ENCODE measurements at regions of chr16 and their contacts with region 1.

Region 1: GRCh38 chr16:56866943-56867830 is 2.2 kb downstream of the SLC12A3 start:
- DNase-seq: peak; percentile 69
- H3K4me3 ChIP-seq: no peak overlapping the region
- H3K27ac ChIP-seq: no peak overlapping the region
- H3K4me1 ChIP-seq: peaks cover 0 to 15% of the 10 kb centered on the region in 2 experiments; a peak in 1 of 4 replicates
- H3K27me3 ChIP-seq: no peaks in the 10 kb centered on the region
- CTCF ChIP-seq: peak; percentile 80
- EP300 ChIP-seq: no peak
- RAD21 ChIP-seq: peak; percentile 80

Region 2: GRCh38 chr16:55981557-55981956 is 885.6 kb before region 1 on chr16:
- CTCF ChIA-PET with region 1: no interaction called
- POLR2A ChIA-PET with region 1: no interaction called
- DNase-seq: no peak
- H3K4me3 ChIP-seq: no peak overlapping the region
- H3K27ac ChIP-seq: no peak overlapping the region
- H3K4me1 ChIP-seq: no peaks in the 10 kb centered on the region
- H3K27me3 ChIP-seq: no peaks in the 10 kb centered on the region
- CTCF ChIP-seq: no peak
- EP300 ChIP-seq: no peak
- RAD21 ChIP-seq: no peak

Region 3: GRCh38 chr16:56732366-56732765 is 134.8 kb before region 1 on chr16:
- CTCF ChIA-PET with region 1: no interaction called
- POLR2A ChIA-PET with region 1: no interaction called
- DNase-seq: no peak
- H3K4me3 ChIP-seq: no peak overlapping the region
- H3K27ac ChIP-seq: no peak overlapping the region
- H3K4me1 ChIP-seq: peaks cover 6 to 10% of the 10 kb centered on the region in 2 experiments; a peak in 2 of 4 replicates
- H3K27me3 ChIP-seq: no peaks in the 10 kb centered on the region
- CTCF ChIP-seq: no peak
- EP300 ChIP-seq: no peak
- RAD21 ChIP-seq: no peak

Region 4: GRCh38 chr16:56789360-56789759 is 77.8 kb before region 1 on chr16:
- CTCF ChIA-PET with region 1: interaction called, 14 read pairs
- POLR2A ChIA-PET with region 1: no interaction called
- DNase-seq: peak; percentile 42
- H3K4me3 ChIP-seq: no peak overlapping the region
- H3K27ac ChIP-seq: no peak overlapping the region
- H3K4me1 ChIP-seq: peaks cover 5 to 21% of the 10 kb centered on the region in 2 experiments; a peak in 3 of 4 replicates
- H3K27me3 ChIP-seq: no peaks in the 10 kb centered on the region
- CTCF ChIP-seq: peak; percentile 56
- EP300 ChIP-seq: no peak
- RAD21 ChIP-seq: peak; percentile 83

Region 5: GRCh38 chr16:56851671-56852400 is 15.4 kb before region 1 on chr16:
- CTCF ChIA-PET with region 1: interaction called, 21 read pairs
- POLR2A ChIA-PET with region 1: no interaction called
- DNase-seq: no peak
- H3K4me3 ChIP-seq: no peak overlapping the region
- H3K27ac ChIP-seq: peak overlapping the region in 1 of 2 experiments; percentile 85; a peak in 2 of 4 replicates
- H3K4me1 ChIP-seq: peaks cover 36 to 46% of the 10 kb centered on the region in 2 experiments
- H3K27me3 ChIP-seq: no peaks in the 10 kb centered on the region
- CTCF ChIP-seq: peak; percentile 64
- EP300 ChIP-seq: no peak
- RAD21 ChIP-seq: peak; percentile 31

Region 6: GRCh38 chr16:56931892-56932720 is 64.9 kb after region 1 on chr16 and contains the start of gene HERPUD1:
- CTCF ChIA-PET with region 1: interaction called, 21 read pairs
- POLR2A ChIA-PET with region 1: interaction called, 5 read pairs
- DNase-seq: peak; percentile 99
- H3K4me3 ChIP-seq: peak within 1 kb of the TSS; percentile 84 to 99
- H3K27ac ChIP-seq: peak within 1 kb of the TSS; percentile 69 to 90
- H3K4me1 ChIP-seq: peaks cover 18 to 32% of the 10 kb centered on the region in 2 experiments; a peak in 3 of 4 replicates
- H3K27me3 ChIP-seq: no peaks in the 10 kb centered on the region
- CTCF ChIP-seq: peak; percentile 18
- EP300 ChIP-seq: peak in 1 of 2 experiments; percentile 23; a peak in 1 of 4 replicates
- RAD21 ChIP-seq: peak; percentile 4; the same call in 1 of the 2 replicates
- polyA plus RNA-seq, gene HERPUD1: 46.3 and 71.1 TPM in 2 replicates

Region 7: GRCh38 chr16:56944954-56945839 is 78.0 kb after region 1 on chr16:
- CTCF ChIA-PET with region 1: interaction called, 56 read pairs
- POLR2A ChIA-PET with region 1: interaction called, 3 read pairs
- DNase-seq: no peak
- H3K4me3 ChIP-seq: no peak overlapping the region
- H3K27ac ChIP-seq: no peak overlapping the region
- H3K4me1 ChIP-seq: peaks cover 0 to 4% of the 10 kb centered on the region in 2 experiments; a peak in 1 of 4 replicates
- H3K27me3 ChIP-seq: no peaks in the 10 kb centered on the region
- CTCF ChIP-seq: no peak
- EP300 ChIP-seq: no peak
- RAD21 ChIP-seq: no peak

Region 8: DNA sequence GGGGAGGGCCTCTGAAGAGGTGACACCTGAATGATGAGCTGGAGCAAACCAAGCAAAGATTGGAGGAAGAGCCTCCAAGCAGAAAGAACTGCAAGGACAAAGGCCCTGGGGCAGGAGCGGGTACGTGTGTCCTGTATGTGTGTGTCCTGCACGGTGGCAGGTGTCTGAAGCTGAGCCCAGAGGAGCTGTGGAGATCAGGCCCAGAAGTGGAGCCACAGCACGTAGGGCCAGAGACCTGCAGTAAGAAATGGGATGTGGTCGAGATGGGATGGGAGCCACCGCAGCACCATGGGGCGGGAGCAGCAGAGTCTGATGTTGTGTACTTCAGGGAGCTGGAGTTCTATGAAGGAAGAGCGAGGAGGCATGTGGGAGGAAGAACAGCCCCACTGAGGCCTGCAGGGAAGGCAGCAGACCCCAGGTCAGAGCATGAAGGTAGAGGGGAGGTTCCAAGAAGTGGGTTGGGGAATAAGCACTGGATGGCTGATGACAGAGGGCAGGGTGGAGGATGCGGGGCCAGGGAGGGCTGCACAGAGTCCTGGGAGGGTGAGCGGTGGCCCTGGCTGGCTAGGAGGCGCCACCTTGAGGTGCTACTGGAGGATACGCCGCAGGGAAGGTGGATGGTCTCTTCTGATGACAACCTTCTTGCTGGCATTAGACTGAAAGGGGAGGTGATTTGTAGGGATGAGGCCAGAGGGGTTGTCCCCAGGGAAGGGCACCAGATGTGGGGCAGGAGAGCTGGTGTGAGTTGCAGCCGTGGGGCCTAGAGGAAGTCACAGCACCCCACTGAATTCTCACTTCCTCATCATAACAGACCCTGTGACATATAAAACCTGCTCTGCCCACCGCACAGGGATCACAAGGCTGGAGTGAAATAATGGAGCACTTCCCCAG is 83.9 kb after region 1 on chr16:
- CTCF ChIA-PET with region 1: interaction called, 56 read pairs
- POLR2A ChIA-PET with region 1: interaction called, 3 read pairs
- DNase-seq: peak; percentile 82
- H3K4me3 ChIP-seq: no peak overlapping the region
- H3K27ac ChIP-seq: no peak overlapping the region
- H3K4me1 ChIP-seq: no peaks in the 10 kb centered on the region; a peak in 1 of 4 replicates
- H3K27me3 ChIP-seq: no peaks in the 10 kb centered on the region
- CTCF ChIP-seq: peak; percentile 65
- EP300 ChIP-seq: no peak
- RAD21 ChIP-seq: peak; percentile 82

Region 9: DNA sequence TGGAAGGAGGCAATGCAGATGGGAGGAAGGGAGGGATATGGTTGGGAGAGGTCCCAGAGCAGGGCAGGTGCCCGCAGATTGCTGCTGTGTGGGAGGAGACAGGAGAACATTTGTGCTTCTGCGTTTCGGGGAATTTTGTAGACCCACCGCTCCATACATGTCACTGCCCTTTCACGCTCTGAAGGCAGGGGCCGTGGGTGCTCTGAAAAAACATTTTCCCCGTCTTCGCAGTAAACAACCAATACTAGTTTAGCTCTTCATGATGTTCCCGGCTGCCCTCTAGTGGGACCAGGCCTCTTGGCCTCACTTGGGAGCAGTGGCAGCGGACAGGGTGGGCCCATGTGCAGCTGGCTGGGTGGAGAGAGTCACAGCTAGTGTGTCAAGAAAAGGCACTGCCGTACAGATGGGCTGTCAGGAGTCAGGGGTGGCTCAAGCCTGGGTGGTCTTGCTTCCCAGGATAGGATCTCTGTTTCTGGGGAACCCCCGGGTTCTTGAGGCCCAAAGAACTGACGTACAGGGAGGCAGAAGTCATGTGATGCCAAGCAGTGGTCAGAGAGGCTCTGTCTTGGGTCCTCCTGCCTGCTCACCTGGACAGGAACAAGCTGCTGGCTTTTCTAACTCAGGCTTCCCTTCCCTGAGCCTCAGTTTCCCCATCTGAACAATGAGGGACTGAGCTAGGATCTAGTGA is 178.7 kb after region 1 on chr16:
- CTCF ChIA-PET with region 1: interaction called, 12 read pairs
- POLR2A ChIA-PET with region 1: no interaction called
- DNase-seq: peak; percentile 64
- H3K4me3 ChIP-seq: no peak overlapping the region
- H3K27ac ChIP-seq: no peak overlapping the region
- H3K4me1 ChIP-seq: no peaks in the 10 kb centered on the region
- H3K27me3 ChIP-seq: no peaks in the 10 kb centered on the region
- CTCF ChIP-seq: peak; percentile 44
- EP300 ChIP-seq: no peak
- RAD21 ChIP-seq: peak; percentile 54